ENCODE measurements at regions of chr11 and their contacts with region 1.

Region 1: GRCh38 chr11:30128269-30128932 is 102.4 kb upstream of the FSHB start:
- DNase-seq: no peak
- H3K4me3 Mint-ChIP-seq: no peak overlapping the region
- H3K27ac Mint-ChIP-seq: no peak overlapping the region
- H3K4me1 Mint-ChIP-seq: no peaks in the 10 kb centered on the region
- H3K27me3 Mint-ChIP-seq: no peaks in the 10 kb centered on the region

Region 2: GRCh38 chr11:30143098-30143705 is 14.8 kb after region 1 on chr11:
- CTCF ChIA-PET with region 1: interaction called, 63 read pairs
- POLR2A ChIA-PET with region 1: no interaction called
- intact Hi-C with region 1: no loop called
- DNase-seq: no peak
- H3K4me3 Mint-ChIP-seq: no peak overlapping the region
- H3K27ac Mint-ChIP-seq: no peak overlapping the region
- H3K4me1 Mint-ChIP-seq: no peaks in the 10 kb centered on the region
- H3K27me3 Mint-ChIP-seq: no peaks in the 10 kb centered on the region

Region 3: GRCh38 chr11:30333405-30333804 is 205.0 kb after region 1 on chr11:
- CTCF ChIA-PET with region 1: no interaction called
- POLR2A ChIA-PET with region 1: no interaction called
- intact Hi-C with region 1: loop called (anchors 1 kb)
- DNase-seq: no peak
- H3K4me3 Mint-ChIP-seq: no peak overlapping the region
- H3K27ac Mint-ChIP-seq: peak overlapping the region; percentile 33
- H3K4me1 Mint-ChIP-seq: peaks cover 27% of the 10 kb centered on the region
- H3K27me3 Mint-ChIP-seq: no peaks in the 10 kb centered on the region